ENCODE measurements at regions of chr20 and their contacts with region 1.

Region 1: GRCh38 chr20:3218307-3218988 is 9.2 kb downstream of the ITPA start:
- DNase-seq: peak; percentile 62 to 72 (median 70)
- H3K4me3 ChIP-seq: no peak overlapping the region
- H3K4me3 Mint-ChIP-seq: no peak overlapping the region
- H3K27ac ChIP-seq: no peak overlapping the region
- H3K27ac Mint-ChIP-seq: no peak overlapping the region
- H3K4me1 ChIP-seq: peaks cover 13% of the 10 kb centered on the region
- H3K4me1 Mint-ChIP-seq: peaks cover 0 to 18% (median 6%) of the 10 kb centered on the region in 4 donors
- H3K27me3 ChIP-seq: no peaks in the 10 kb centered on the region
- H3K27me3 Mint-ChIP-seq: no peaks in the 10 kb centered on the region

Region 2: GRCh38 chr20:3239026-3239866 is 20.8 kb after region 1 on chr20 and contains the start of gene SLC4A11:
- CTCF ChIA-PET with region 1: interaction called, 8 read pairs
- POLR2A ChIA-PET with region 1: interaction called, 7 read pairs
- intact Hi-C with region 1: loop called (anchors 1 kb)
- DNase-seq: peak in 3 of 5 donors; percentile 18 to 32 (median 29)
- H3K4me3 ChIP-seq: peak within 1 kb of the TSS; percentile 29 to 59
- H3K4me3 Mint-ChIP-seq: peak within 1 kb of the TSS; percentile 86 to 95 (median 92)
- H3K27ac ChIP-seq: no peak within 1 kb of the TSS
- H3K27ac Mint-ChIP-seq: peak within 1 kb of the TSS in 4 of 7 donors; percentile 30 to 79 (median 54)
- H3K4me1 ChIP-seq: peaks cover 14% of the 10 kb centered on the region
- H3K4me1 Mint-ChIP-seq: peaks cover 2 to 23% (median 9%) of the 10 kb centered on the region in 4 donors
- H3K27me3 ChIP-seq: peaks cover 34% of the 10 kb centered on the region
- H3K27me3 Mint-ChIP-seq: peaks cover 15 to 32% of the 10 kb centered on the region in 2 donors
- total RNA-seq, gene SLC4A11: 0.35 to 0.83 TPM

Region 3: GRCh38 chr20:3248167-3248992 is 29.9 kb after region 1 on chr20:
- CTCF ChIA-PET with region 1: interaction called, 15 read pairs
- POLR2A ChIA-PET with region 1: no interaction called
- intact Hi-C with region 1: no loop called
- DNase-seq: peak in 1 of 5 donors; percentile 9
- H3K4me3 ChIP-seq: no peak overlapping the region
- H3K4me3 Mint-ChIP-seq: peak overlapping the region in 5 of 8 donors; percentile 17 to 71 (median 52)
- H3K27ac ChIP-seq: no peak overlapping the region
- H3K27ac Mint-ChIP-seq: peak overlapping the region in 1 of 7 donors; percentile 50
- H3K4me1 ChIP-seq: peaks cover 10% of the 10 kb centered on the region
- H3K4me1 Mint-ChIP-seq: no peaks in the 10 kb centered on the region
- H3K27me3 ChIP-seq: peaks cover 7% of the 10 kb centered on the region
- H3K27me3 Mint-ChIP-seq: peaks cover 4 to 15% of the 10 kb centered on the region in 2 donors

Region 4: DNA sequence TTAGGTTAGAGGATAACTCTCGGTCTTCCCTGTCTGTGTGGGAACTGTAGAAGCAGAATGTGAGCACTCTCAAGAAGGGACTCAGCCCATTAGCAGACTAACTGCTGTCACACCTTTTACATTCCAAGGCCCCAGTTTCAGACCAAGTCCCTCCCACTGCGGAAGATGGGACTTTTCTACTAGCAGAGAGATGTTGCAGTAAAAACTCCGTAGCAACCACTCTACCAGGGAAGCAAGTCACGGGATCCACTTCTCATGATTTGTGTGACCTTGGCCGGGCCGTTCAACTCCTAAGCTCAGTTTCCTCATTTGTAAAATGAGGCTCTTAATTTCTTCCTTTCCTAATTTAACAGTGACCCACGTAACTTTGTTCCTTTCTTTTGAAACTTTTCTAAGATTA is 97.7 kb after region 1 on chr20:
- CTCF ChIA-PET with region 1: interaction called, 20 read pairs
- POLR2A ChIA-PET with region 1: no interaction called
- intact Hi-C with region 1: loop called (anchors 1 kb)
- DNase-seq: no peak
- H3K4me3 ChIP-seq: no peak overlapping the region
- H3K4me3 Mint-ChIP-seq: no peak overlapping the region
- H3K27ac ChIP-seq: no peak overlapping the region
- H3K27ac Mint-ChIP-seq: peak overlapping the region in 1 of 7 donors; percentile 23
- H3K4me1 ChIP-seq: no peaks in the 10 kb centered on the region
- H3K4me1 Mint-ChIP-seq: no peaks in the 10 kb centered on the region
- H3K27me3 ChIP-seq: no peaks in the 10 kb centered on the region
- H3K27me3 Mint-ChIP-seq: no peaks in the 10 kb centered on the region

Region 5: GRCh38 chr20:3330046-3330741 is 111.7 kb after region 1 on chr20:
- CTCF ChIA-PET with region 1: interaction called, 11 read pairs
- POLR2A ChIA-PET with region 1: no interaction called
- intact Hi-C with region 1: no loop called
- DNase-seq: peak in 1 of 5 donors; percentile 19
- H3K4me3 ChIP-seq: no peak overlapping the region
- H3K4me3 Mint-ChIP-seq: peak overlapping the region in 1 of 8 donors; percentile 20
- H3K27ac ChIP-seq: no peak overlapping the region
- H3K27ac Mint-ChIP-seq: peak overlapping the region; percentile 5 to 73 (median 63)
- H3K4me1 ChIP-seq: peaks cover 24% of the 10 kb centered on the region
- H3K4me1 Mint-ChIP-seq: peaks cover 16 to 35% (median 29%) of the 10 kb centered on the region in 4 donors
- H3K27me3 ChIP-seq: no peaks in the 10 kb centered on the region
- H3K27me3 Mint-ChIP-seq: no peaks in the 10 kb centered on the region

Region 6: GRCh38 chr20:3710703-3711483 is 492.4 kb after region 1 on chr20:
- CTCF ChIA-PET with region 1: interaction called, 4 read pairs
- POLR2A ChIA-PET with region 1: no interaction called
- intact Hi-C with region 1: loop called (anchors 5 kb)
- DNase-seq: peak; percentile 55 to 69 (median 57)
- H3K4me3 ChIP-seq: no peak overlapping the region
- H3K4me3 Mint-ChIP-seq: no peak overlapping the region
- H3K27ac ChIP-seq: no peak overlapping the region
- H3K27ac Mint-ChIP-seq: no peak overlapping the region
- H3K4me1 ChIP-seq: no peaks in the 10 kb centered on the region
- H3K4me1 Mint-ChIP-seq: peaks cover 0 to 10% (median 2%) of the 10 kb centered on the region in 4 donors
- H3K27me3 ChIP-seq: no peaks in the 10 kb centered on the region
- H3K27me3 Mint-ChIP-seq: peaks cover 0 to 8% of the 10 kb centered on the region in 2 donors

Measured in CD4-positive, alpha-beta memory T cell (primary cell).